MCF 10A (cell line): ENCODE measurements at regions of chr6 and their contacts with region 1.

Region 1: GRCh38 chr6:118580585-118581419 is 32.7 kb downstream of the PLN start:
- DNase-seq: peak; percentile 94
- H3K4me3 Mint-ChIP-seq: peak overlapping the region; percentile 71
- H3K27ac Mint-ChIP-seq: peak overlapping the region; percentile 29
- H3K4me1 Mint-ChIP-seq: peaks cover 16% of the 10 kb centered on the region
- H3K27me3 Mint-ChIP-seq: no peaks in the 10 kb centered on the region
- CTCF ChIP-seq: peak; percentile 68

Region 2: GRCh38 chr6:118509009-118509617 is 71.7 kb before region 1 on chr6:
- CTCF ChIA-PET with region 1: interaction called, 3 read pairs
- POLR2A ChIA-PET with region 1: no interaction called
- intact Hi-C with region 1: loop called (anchors 1 kb)
- DNase-seq: peak; percentile 43
- H3K4me3 Mint-ChIP-seq: no peak overlapping the region
- H3K27ac Mint-ChIP-seq: no peak overlapping the region
- H3K4me1 Mint-ChIP-seq: no peaks in the 10 kb centered on the region
- H3K27me3 Mint-ChIP-seq: no peaks in the 10 kb centered on the region
- CTCF ChIP-seq: peak; percentile 63

Region 3: DNA sequence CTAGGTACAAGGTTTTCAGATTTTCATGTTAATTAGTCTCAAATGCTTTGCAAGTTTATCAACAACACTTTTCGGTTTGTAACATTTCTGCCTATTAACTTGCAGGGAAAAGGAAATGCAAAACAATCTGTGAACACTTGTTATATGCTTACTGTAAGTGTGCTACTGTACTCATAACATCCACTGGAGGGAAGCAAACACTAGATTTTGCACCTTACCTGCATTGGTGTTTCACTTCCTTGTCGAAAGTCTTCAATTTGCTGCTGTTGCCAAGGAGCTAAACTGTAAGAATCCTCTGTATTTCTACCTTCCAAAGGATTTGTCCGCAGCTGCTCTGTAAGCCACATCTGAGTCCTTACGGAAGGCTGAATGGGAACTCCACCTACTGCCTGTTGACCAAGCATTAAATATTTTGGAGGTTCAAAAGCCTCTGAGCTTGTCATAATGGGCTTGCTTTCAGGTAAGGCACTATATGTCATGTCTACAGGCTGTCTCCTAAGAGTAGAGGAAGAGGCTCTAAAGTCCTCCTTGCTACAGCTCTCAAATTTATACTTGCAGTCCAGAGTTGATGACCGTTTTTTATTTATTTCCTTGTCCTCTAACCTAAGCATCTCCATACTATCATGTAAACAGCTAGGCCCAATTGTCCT is 15.4 kb before region 1 on chr6:
- CTCF ChIA-PET with region 1: interaction called, 29 read pairs
- POLR2A ChIA-PET with region 1: interaction called, 5 read pairs
- intact Hi-C with region 1: no loop called
- DNase-seq: peak; percentile 42
- H3K4me3 Mint-ChIP-seq: no peak overlapping the region
- H3K27ac Mint-ChIP-seq: peak overlapping the region; percentile 42
- H3K4me1 Mint-ChIP-seq: no peaks in the 10 kb centered on the region
- H3K27me3 Mint-ChIP-seq: no peaks in the 10 kb centered on the region
- CTCF ChIP-seq: peak; percentile 52

Region 4: DNA sequence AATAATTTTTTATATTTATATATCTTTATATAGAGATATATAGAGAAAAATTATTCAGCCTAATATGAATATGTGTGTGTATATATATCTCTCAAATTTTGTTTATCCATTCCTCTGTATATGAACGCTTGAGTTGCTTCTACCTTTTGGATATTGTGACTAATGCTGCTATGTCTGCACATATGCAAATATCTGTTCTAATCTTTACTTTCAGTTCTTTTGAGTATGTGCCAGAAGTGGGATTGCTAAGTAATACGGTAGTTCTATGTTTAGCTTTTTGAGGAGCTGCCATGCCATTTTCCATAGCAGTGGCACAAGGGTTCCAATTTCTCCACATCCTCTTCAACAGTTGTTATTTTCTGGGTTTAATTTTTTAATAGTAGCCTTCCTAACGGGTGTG is 143.4 kb after region 1 on chr6:
- CTCF ChIA-PET with region 1: no interaction called
- POLR2A ChIA-PET with region 1: no interaction called
- intact Hi-C with region 1: no loop called
- DNase-seq: peak; percentile 38
- H3K4me3 Mint-ChIP-seq: no peak overlapping the region
- H3K27ac Mint-ChIP-seq: no peak overlapping the region
- H3K4me1 Mint-ChIP-seq: peaks cover 4% of the 10 kb centered on the region
- H3K27me3 Mint-ChIP-seq: no peaks in the 10 kb centered on the region
- CTCF ChIP-seq: no peak

Region 5: DNA sequence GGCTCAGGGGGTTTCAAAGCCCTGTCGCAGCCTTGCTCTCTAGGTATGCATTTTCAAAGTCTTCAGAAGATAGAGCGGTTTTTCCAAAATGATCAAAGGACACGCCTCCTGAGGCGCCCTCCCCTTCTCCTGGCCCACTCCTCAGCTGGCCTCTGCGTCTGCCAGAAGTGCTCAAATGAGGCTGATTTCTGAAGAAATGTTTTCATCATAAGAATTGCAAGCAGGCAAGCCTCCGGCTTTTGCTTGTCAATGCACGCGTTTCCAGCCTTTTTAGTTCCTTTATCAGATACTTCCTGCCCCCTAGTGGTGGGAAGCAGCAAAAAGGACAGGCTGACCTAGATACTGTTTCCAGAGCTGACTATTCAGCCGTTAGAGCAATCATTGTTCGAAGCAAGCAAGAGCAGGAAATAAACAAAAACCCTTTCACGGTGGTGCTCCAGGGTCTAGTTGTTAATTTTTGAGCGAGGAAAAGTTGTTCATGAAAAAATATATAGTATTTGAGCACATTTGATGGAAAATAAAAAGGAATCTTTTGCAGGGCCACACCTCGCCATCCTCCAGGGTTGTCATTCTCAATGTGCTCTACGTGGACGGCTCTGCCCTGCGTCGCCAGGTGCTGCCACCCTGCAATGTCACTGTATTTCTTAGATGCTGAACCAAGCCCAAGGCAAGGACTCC is 219.7 kb after region 1 on chr6:
- CTCF ChIA-PET with region 1: interaction called, 4 read pairs
- POLR2A ChIA-PET with region 1: no interaction called
- intact Hi-C with region 1: loop called (anchors 1 kb)
- DNase-seq: peak; percentile 86
- H3K4me3 Mint-ChIP-seq: no peak overlapping the region
- H3K27ac Mint-ChIP-seq: no peak overlapping the region
- H3K4me1 Mint-ChIP-seq: peaks cover 7% of the 10 kb centered on the region
- H3K27me3 Mint-ChIP-seq: no peaks in the 10 kb centered on the region
- CTCF ChIP-seq: peak; percentile 81